ENCODE measurements at regions of chr1 and their contacts with region 1.

Region 1: GRCh38 chr1:205523891-205524793 is 19.7 kb downstream of the CDK18 start:
- DNase-seq: peak; percentile 78
- CTCF ChIP-seq: peak; percentile 77

Region 2: GRCh38 chr1:205344066-205344928 is 179.8 kb before region 1 on chr1:
- CTCF ChIA-PET with region 1: interaction called, 14 read pairs
- POLR2A ChIA-PET with region 1: no interaction called
- DNase-seq: no peak
- CTCF ChIP-seq: no peak

Region 3: DNA sequence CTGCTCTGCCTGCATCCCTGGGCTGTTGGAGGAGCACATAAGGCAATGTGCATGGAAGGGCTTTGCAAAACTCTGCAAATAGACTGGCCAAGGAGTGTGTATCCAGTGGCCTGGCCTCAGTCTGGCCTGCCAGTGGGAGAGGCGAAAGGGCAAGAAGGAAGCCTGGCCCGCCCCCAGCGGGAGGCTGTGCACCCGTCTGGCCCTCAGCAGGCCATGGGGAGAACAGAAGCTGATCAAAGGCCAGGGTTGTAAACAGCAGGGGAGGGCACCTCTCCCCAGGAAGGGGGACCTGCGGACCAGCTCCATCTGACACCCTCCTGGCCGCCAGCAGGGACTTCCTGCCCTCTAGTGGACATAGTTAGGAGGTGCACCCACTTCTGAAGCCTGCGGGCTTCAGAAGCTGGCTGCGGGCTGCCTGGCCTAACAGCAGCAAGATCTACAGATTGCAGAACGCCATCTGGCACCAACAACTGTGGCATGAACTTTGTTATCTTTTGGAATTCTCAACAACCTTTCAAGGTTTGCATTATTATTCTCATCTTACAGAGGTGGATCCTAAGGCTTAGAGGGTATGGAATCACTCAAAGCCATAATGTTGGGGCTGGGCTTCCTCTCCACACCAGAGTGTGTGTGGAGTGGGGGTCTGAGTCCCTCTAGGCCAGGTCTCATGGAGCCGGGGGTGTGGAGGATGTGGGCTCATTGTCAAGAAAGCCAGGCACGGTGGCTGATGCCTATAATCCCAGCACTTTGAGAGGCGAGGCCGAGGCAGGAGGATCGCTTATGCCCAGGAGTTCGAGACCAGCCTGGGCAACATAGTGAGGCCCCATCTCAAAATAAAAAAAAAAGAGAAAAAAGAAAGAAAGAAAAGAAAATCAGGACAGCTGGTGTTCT is 38.6 kb before region 1 on chr1:
- CTCF ChIA-PET with region 1: interaction called, 194 read pairs
- POLR2A ChIA-PET with region 1: no interaction called
- DNase-seq: peak; percentile 87
- CTCF ChIP-seq: peak; percentile 90

Region 4: GRCh38 chr1:205536759-205537361 is 12.7 kb after region 1 on chr1:
- CTCF ChIA-PET with region 1: interaction called, 24 read pairs
- POLR2A ChIA-PET with region 1: no interaction called
- DNase-seq: no peak
- CTCF ChIP-seq: no peak

Region 5: DNA sequence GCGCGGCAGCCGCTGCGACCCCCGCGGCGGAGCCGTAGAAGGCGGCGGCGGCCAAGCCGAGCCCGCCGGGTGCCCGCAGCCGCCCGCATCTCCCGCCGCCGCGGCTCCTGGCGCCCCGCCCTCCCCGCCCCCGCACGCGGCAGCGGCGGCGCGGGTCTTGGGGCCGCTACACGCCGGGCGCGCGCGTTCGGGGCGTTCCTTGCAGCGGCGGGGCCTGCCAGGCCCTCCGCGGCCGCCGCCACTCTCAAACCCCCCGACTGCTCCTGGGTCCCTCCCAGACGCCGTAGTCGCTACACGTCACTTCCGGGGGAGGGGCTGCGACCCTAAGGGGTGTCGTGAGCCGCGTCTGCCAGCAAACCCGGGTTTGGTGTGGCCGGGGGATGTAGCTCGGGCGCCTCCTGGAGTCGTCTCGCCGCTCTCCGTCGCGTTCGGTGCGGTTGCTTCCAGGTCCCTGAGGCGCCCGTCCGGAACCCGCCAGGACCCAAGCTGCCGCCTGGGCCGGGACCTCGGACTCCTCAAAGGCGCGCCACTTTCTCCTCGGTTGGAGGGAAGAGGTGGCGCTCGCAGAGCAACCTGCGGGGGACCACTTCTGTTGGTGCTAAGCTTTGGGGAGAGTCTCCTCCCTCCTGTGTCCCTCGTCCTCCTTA is 107.7 kb after region 1 on chr1 and contains the start of gene ELK4:
- CTCF ChIA-PET with region 1: interaction called, 19 read pairs
- POLR2A ChIA-PET with region 1: no interaction called
- DNase-seq: peak; percentile 97
- CTCF ChIP-seq: peak; percentile 79

Measured in GM10248 (cell line).